Right ventricle myocardium inferior (tissue), 1 donor: ENCODE measurements at regions of chr1 and their contacts with region 1.

Region 1: DNA sequence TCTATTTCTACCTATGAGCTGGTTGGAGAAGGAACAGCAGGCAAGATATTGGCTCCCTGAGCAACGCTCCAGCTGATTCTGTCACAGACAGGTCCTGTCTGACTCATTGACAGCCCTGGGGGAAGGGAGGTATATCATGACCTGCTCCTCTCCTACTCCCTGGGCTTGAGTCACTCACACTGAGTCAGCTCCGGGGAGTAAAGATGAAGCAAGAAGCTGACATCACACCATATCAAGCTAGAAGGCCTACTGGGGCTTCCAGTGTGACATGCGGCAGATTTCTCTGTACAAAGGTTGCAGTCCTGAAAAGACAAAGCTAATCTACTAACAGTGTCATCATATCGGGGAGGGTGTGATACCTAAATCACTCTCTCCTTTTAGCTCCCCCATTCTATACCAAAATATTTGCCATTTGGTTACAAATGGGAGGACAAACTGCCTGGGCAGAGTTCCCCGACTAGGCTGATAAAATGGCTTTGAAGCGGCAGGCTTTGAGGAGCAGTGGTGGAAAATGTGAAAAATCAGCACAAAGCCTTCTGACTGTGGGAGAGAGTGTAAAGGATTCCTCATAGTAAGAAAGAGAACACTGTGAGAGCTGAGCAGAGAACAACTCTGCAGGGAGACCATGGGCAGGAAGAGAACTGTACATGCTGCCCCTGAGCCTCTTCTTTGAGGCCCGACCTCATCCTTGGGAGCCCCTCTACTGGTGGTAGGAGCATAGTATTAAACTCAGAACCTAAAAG is 15.5 kb downstream of the PI4KB start:
- DNase-seq: no peak
- ATAC-seq: peak; percentile 87

Region 2: GRCh38 chr1:151281969-151282882 is 29.5 kb before region 1 on chr1 and contains the start of gene ZNF687:
- intact Hi-C with region 1: loop called (anchors 2 kb)
- DNase-seq: peak; percentile 100
- ATAC-seq: peak; percentile 95
- total RNA-seq, gene ZNF687: 10.8 TPM

Region 3: DNA sequence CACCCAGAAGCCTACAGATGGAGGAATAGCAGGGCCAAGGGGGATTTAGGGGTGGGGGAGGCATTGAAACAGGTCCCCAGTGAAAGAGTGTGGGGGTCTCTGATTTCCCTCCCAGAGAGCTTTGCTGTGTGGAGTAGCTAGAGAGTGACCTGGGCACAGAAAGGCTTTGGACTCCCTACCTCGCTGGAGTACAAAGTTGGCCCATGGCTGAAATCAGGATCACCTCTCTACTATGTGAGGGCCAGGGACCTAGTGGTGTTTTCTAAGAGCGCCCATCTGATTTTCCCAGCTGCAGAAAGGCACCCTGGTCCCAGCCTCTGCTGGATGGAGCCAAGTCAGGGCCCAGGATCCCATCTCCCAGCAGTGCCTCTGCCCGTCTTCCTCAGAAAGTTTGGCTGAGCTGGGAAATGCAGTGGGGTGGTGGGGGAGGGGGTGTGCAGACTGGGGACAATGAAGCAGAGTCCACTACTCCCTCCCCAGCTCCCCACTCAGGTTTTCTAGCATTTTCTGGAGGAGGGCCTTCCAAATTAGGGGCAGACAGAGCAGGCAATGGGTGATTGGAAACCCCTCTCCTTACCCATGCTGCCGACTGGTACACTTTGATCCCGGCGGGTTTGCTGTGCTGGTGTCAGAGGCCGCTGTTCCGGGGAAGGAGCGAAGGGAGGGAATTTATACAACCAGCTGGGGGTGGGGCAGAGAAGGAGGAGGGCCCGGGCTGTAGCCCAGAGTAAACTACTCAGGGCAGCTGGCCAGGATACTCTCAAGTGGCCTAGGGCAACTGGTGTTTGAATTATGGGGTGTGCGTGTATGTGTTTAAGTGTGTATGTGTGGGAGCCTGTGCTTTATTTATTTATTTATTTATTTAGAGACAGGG is 60.5 kb after region 1 on chr1 and contains the start of gene SELENBP1:
- intact Hi-C with region 1: no loop called
- DNase-seq: peak; percentile 88
- ATAC-seq: peak; percentile 86
- total RNA-seq, gene SELENBP1: 129 TPM